Kidney (tissue), 22 donors: ENCODE measurements at regions of chr1 and their contacts with region 1.

Region 1: DNA sequence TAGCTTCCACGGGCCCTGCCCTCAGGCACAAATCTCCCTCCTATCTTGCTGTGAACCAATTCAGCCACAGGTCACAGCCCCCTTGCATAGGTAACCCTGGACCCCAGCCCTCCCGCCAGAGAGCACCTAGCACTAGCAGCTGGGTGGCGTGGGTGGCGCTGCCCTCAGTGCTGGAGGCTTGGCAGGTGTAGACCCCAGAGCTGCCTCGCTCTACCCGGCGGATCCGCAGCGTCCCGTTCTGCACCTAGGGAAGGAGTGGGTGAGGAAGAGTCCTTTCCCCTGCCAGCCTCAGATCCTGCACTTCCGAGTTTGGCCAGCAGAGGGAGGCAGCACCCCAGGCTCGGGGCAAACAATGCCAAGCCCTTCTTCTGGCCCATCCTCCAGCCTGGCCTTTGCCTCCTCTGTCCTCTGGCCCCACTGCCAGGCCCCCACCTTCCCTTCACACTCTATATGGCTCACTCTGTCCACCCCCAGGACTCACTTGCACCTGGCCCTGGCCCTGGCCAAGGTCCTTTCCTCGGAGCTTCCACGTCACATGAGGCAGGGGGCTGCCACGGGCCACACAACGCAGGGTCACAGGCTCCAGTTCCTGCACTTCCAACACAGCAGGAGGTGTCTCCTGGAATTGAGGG is 9.0 kb downstream of the IGSF9 start:
- DNase-seq: peak; percentile 66 to 89 (median 79)
- H3K4me3 ChIP-seq: no peak overlapping the region
- H3K27ac ChIP-seq: no peak overlapping the region
- H3K4me1 ChIP-seq: peaks cover 0 to 4% (median 0%) of the 10 kb centered on the region in 3 donors
- H3K27me3 ChIP-seq: no peaks in the 10 kb centered on the region
- CTCF ChIP-seq: peak; percentile 95

Region 2: GRCh38 chr1:160006312-160006940 is 70.0 kb after region 1 on chr1:
- intact Hi-C with region 1: loop called (anchors 5 kb)
- DNase-seq: peak in 4 of 5 donors; percentile 69 to 82 (median 76)
- H3K4me3 ChIP-seq: no peak overlapping the region
- H3K27ac ChIP-seq: no peak overlapping the region
- H3K4me1 ChIP-seq: no peaks in the 10 kb centered on the region
- H3K27me3 ChIP-seq: no peaks in the 10 kb centered on the region
- CTCF ChIP-seq: peak; percentile 81